ENCODE measurements at regions of chr16 and their contacts with region 1.

Region 1: GRCh38 chr16:17205279-17206211 is 265.2 kb downstream of the XYLT1 start:
- DNase-seq: no peak
- ATAC-seq: no peak; the same call in 2 of the 3 replicates
- H3K4me3 ChIP-seq: no peak overlapping the region
- H3K27ac ChIP-seq: no peak overlapping the region
- H3K4me1 ChIP-seq: no peaks in the 10 kb centered on the region
- H3K27me3 ChIP-seq: no peaks in the 10 kb centered on the region
- CTCF ChIP-seq: no peak
- EP300 ChIP-seq: no peak
- POLR2A ChIP-seq: no peak
- RAD21 ChIP-seq: no peak

Region 2: DNA sequence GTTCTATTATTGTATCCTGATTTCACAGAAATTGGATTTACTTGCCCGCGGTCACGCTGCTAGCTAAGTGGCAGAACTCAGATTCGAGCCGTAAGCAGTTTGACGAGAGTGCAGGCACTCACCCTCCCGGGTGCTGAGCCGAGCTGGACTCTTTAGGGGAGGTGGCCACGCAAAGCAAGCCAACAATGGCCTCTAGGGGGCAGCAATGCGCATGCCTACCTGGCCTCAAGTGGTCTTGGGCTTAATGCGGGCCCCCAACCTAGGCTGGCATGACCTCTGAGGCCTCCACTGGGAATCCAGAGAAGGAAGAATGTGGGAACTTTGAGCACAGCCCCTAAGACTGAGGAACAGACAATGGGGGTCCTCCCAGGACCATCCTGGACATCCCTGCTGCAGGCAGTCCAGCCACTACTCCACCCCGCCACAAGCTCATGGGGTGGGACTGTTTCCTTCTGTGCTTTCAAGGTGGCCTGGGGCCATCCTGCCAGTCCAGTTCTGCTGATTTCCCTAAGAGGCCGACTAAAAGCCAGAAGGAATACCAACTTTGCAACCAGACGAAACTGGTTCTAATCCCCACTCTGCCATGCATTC is 11.3 kb before region 1 on chr16:
- CTCF ChIA-PET with region 1: interaction called, 14 read pairs
- POLR2A ChIA-PET with region 1: no interaction called
- RAD21 ChIA-PET with region 1: no interaction called
- SMC1A ChIA-PET with region 1: interaction called, 3 read pairs
- in situ Hi-C with region 1: no loop called
- intact Hi-C with region 1: no loop called
- DNase-seq: no peak
- ATAC-seq: peak; percentile 82
- H3K4me3 ChIP-seq: no peak overlapping the region
- H3K27ac ChIP-seq: no peak overlapping the region
- H3K4me1 ChIP-seq: no peaks in the 10 kb centered on the region
- H3K27me3 ChIP-seq: no peaks in the 10 kb centered on the region
- CTCF ChIP-seq: peak; percentile 53 to 87 (median 69)
- EP300 ChIP-seq: no peak
- POLR2A ChIP-seq: no peak
- RAD21 ChIP-seq: peak; percentile 60

Measured in GM12878 (cell line).